B cell (primary cell): ENCODE measurements at regions of chr1 and their contacts with region 1.

Region 1: DNA sequence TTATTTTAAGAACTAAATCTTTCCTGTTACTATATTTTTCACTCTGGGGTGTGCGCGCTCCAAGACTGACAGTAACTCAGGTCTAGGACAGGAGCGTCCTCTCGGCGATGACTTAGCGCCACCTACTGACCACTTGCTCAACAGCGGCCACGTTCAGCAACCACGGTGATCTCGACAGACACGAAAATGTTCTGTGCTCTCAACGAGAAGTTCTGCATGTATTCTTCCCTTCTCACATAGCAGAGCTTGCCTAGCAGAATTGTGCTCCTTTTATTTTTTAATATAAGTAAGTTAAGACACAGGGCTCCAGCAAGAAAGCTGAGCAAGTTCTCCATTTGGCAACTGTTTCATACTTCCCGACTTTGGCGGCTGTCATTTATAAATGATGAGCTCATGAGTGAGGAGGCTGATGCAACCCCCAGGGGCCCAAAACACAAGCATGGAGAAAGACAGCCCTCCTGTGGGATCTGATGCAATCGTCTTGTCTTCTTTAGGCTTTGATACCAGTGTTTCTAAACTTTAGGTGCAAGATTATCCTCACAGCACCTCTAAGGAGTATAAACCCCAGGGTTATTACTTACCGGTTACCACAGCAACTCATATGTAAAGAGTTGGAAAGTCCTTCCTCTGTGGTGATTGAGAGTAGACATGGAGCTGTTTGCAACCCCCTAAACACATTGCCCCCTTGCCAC is 92.6 kb downstream of the HHIPL2 start:
- DNase-seq: peak; percentile 83
- ATAC-seq: peak; percentile 97
- H3K4me3 ChIP-seq: no peak overlapping the region
- H3K4me3 Mint-ChIP-seq: peak overlapping the region; percentile 1
- H3K27ac ChIP-seq: no peak overlapping the region
- H3K27ac Mint-ChIP-seq: no peak overlapping the region
- H3K4me1 ChIP-seq: peaks cover 3 to 11% of the 10 kb centered on the region in 2 donors
- H3K4me1 Mint-ChIP-seq: peaks cover 5% of the 10 kb centered on the region
- H3K27me3 ChIP-seq: peaks cover 0 to 6% (median 0%) of the 10 kb centered on the region in 4 experiments
- H3K27me3 Mint-ChIP-seq: peaks cover 6% of the 10 kb centered on the region
- CTCF ChIP-seq: peak; percentile 97

Region 2: DNA sequence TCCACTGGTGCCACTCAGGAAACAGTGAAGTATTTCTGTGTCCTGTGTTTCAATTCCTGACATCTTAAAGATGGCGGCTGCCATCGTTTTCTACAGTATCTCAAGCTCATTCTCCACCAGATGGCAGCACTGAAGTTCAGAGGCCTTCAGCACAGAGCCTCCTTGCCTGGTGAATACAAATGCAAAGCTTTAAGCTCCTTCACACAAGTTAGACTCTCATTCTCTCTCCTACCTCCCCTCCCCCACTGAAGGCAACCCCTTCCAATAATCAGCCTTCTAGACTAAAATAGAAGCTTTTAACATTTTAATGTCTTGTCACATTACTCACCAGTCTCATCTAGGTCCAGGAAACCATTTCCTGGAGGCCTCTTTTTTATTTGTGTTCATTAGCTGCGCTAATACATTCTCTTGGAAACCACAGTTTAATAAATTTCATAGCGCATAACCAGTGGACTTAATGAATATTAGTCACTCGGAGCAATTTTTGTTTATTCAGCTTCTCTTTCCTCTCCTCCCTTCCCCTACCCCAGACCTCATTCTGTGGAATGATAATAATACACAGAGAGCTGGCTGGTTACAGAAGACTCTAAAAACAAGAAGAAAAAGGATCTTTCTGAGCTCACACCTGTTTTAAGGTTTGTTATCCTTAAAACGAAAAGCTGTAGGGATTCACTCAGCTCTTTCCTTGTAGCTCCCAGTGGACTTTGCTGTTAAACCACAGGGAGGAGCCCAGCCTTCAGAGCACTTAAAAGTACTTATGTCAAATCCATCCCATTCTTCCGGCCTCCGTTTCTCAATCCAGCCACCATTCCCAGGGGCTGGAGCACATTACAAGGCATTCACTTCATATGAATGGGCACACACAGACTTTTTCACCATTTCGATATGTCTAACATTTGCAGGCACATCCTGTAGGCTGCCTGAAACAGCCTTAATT is 1191.2 kb before region 1 on chr1:
- CTCF ChIA-PET with region 1: interaction called, 39 read pairs
- POLR2A ChIA-PET with region 1: no interaction called
- intact Hi-C with region 1: no loop called
- DNase-seq: peak; percentile 63
- ATAC-seq: peak; percentile 58
- H3K4me3 ChIP-seq: no peak overlapping the region
- H3K4me3 Mint-ChIP-seq: no peak overlapping the region
- H3K27ac ChIP-seq: no peak overlapping the region
- H3K27ac Mint-ChIP-seq: no peak overlapping the region
- H3K4me1 ChIP-seq: no peaks in the 10 kb centered on the region
- H3K4me1 Mint-ChIP-seq: no peaks in the 10 kb centered on the region
- H3K27me3 ChIP-seq: peaks cover 0 to 3% (median 0%) of the 10 kb centered on the region in 4 experiments
- H3K27me3 Mint-ChIP-seq: peaks cover 28% of the 10 kb centered on the region
- CTCF ChIP-seq: peak; percentile 67

Region 3: DNA sequence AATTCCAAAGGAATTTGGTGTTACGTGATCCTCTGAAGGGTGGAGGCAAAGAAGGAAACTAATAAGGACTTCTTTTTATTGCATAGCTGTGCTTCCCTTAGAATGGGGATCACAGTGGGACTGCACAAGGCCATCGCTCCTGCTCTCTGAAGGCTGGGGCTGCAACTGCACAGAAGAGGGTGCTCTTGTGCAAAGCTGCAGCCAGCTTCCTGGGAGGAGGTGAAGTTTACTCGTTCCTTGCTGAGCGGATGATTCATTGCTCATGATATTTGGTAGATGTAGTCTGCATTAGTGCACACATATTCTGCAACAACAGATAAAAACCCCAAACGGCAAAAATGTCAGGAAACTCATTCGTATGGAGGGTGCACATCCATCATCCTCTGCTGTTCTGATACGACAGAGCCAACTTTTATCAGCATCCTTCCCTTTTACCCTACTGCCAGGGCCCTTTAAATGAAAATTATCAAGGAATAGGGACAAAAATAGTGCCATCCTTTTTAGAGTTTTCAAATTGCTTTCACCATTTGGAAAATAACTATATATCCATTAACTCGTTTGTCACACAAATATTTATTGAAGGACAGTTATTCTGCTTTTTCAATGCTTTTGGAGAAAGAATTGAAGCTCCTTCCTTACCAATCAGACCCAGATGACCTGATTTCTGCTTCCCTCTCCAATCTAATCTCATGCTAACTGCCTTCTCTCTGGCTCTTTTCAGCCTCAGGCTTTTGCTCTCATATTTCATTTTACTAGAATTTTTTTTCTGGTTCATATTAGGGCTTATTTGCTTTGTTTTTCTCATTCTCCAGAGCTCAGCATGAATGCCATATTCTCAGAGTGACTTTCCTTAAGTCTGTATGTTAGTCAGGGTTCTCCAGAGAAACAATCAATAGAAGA is 977.0 kb before region 1 on chr1:
- CTCF ChIA-PET with region 1: interaction called, 85 read pairs
- POLR2A ChIA-PET with region 1: no interaction called
- intact Hi-C with region 1: no loop called
- DNase-seq: peak; percentile 55
- ATAC-seq: peak; percentile 85
- H3K4me3 ChIP-seq: no peak overlapping the region
- H3K4me3 Mint-ChIP-seq: no peak overlapping the region
- H3K27ac ChIP-seq: no peak overlapping the region
- H3K27ac Mint-ChIP-seq: no peak overlapping the region
- H3K4me1 ChIP-seq: peaks cover 0 to 3% of the 10 kb centered on the region in 2 donors
- H3K4me1 Mint-ChIP-seq: peaks cover 2% of the 10 kb centered on the region
- H3K27me3 ChIP-seq: no peaks in the 10 kb centered on the region
- H3K27me3 Mint-ChIP-seq: peaks cover 5% of the 10 kb centered on the region
- CTCF ChIP-seq: peak; percentile 62

Region 4: DNA sequence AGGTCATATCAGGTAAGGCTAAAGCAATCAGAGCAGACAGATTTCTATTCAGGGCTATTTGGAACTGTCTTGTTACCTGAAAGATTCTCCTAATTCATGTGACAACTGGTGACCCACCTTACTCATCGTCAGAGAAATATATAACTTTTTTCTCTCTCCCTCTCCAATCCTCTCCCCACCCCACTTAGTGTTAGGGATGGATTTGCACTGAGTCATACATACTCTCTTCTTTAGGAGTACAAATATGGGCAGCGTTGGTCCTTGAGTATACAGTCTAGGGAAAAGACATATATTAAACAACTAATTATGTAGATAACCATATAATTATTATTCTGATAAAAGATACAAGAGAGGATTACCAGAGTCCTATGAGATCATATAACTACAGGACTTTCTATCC is 153.7 kb before region 1 on chr1:
- CTCF ChIA-PET with region 1: no interaction called
- POLR2A ChIA-PET with region 1: no interaction called
- intact Hi-C with region 1: no loop called
- DNase-seq: no peak
- ATAC-seq: no peak
- H3K4me3 ChIP-seq: no peak overlapping the region
- H3K4me3 Mint-ChIP-seq: no peak overlapping the region
- H3K27ac ChIP-seq: no peak overlapping the region
- H3K27ac Mint-ChIP-seq: no peak overlapping the region
- H3K4me1 ChIP-seq: no peaks in the 10 kb centered on the region
- H3K4me1 Mint-ChIP-seq: no peaks in the 10 kb centered on the region
- H3K27me3 ChIP-seq: no peaks in the 10 kb centered on the region
- H3K27me3 Mint-ChIP-seq: peaks cover 8% of the 10 kb centered on the region
- CTCF ChIP-seq: no peak

Region 5: DNA sequence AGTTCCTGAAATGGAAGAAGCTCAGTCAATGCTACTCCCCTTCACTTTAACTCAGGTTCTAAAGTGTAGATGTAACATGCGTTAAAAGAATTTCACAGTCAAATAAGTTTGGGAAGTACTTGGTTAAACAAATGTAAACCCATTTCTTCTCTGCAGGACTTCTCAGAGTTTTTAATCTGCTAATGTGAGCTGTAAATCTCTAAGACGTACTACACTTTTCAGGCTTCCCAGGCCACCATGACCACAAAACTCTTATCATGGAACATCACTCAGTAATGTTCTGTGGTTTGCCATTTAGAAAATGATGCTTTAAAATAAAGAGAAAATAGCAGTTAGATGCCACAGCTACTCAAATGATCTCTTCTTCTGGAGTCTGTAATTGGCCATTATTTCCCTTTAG is 11.8 kb before region 1 on chr1:
- CTCF ChIA-PET with region 1: interaction called, 30 read pairs
- POLR2A ChIA-PET with region 1: no interaction called
- intact Hi-C with region 1: no loop called
- DNase-seq: no peak
- ATAC-seq: no peak
- H3K4me3 ChIP-seq: no peak overlapping the region
- H3K4me3 Mint-ChIP-seq: no peak overlapping the region
- H3K27ac ChIP-seq: no peak overlapping the region
- H3K27ac Mint-ChIP-seq: no peak overlapping the region
- H3K4me1 ChIP-seq: no peaks in the 10 kb centered on the region
- H3K4me1 Mint-ChIP-seq: no peaks in the 10 kb centered on the region
- H3K27me3 ChIP-seq: peaks cover 0 to 7% (median 2%) of the 10 kb centered on the region in 4 experiments
- H3K27me3 Mint-ChIP-seq: peaks cover 20% of the 10 kb centered on the region
- CTCF ChIP-seq: no peak

Region 6: DNA sequence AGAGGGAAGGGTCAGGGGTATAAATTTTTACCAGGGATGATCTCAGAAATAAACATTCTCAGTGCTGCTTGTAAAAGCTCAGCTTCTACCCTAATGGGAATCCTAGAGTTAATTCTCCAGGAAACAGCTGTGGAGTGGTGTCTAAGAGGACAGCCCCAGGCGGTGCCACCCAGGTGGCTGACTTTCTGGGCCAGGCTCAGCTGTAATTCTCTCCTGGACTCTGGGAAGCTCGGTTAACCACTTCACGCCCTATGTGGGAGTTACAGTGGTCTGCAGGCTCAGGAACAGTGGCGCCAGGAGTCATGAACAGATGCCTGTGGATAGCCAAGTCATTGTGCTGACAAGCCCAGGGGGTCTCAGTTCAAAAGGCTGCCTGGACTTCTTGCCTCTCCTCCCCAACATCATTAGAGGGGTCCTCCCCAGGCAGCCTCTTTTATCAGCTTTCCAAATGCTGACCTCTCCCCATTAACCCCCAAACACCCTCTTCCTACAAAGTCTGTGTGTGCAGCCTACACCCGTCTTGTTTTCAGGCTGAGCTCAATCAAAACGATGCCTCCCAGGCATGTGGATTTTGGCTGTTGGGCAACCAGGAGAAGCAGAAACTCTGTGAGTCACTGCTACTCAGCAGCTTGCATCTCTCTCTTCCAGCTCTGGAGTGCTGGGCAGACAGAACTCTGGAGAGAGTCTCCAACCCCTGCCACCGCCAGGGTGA is 91.4 kb after region 1 on chr1:
- CTCF ChIA-PET with region 1: no interaction called
- POLR2A ChIA-PET with region 1: no interaction called
- intact Hi-C with region 1: no loop called
- DNase-seq: no peak
- ATAC-seq: no peak
- H3K4me3 ChIP-seq: no peak overlapping the region
- H3K4me3 Mint-ChIP-seq: no peak overlapping the region
- H3K27ac ChIP-seq: no peak overlapping the region
- H3K27ac Mint-ChIP-seq: no peak overlapping the region
- H3K4me1 ChIP-seq: no peaks in the 10 kb centered on the region
- H3K4me1 Mint-ChIP-seq: no peaks in the 10 kb centered on the region
- H3K27me3 ChIP-seq: peaks cover 0 to 16% (median 7%) of the 10 kb centered on the region in 4 experiments
- H3K27me3 Mint-ChIP-seq: peaks cover 26% of the 10 kb centered on the region
- CTCF ChIP-seq: no peak

Region 7: GRCh38 chr1:222634180-222635013 is 179.1 kb after region 1 on chr1:
- CTCF ChIA-PET with region 1: interaction called, 13 read pairs
- POLR2A ChIA-PET with region 1: no interaction called
- intact Hi-C with region 1: no loop called
- DNase-seq: peak; percentile 89
- ATAC-seq: peak; percentile 86
- H3K4me3 ChIP-seq: no peak overlapping the region
- H3K4me3 Mint-ChIP-seq: no peak overlapping the region
- H3K27ac ChIP-seq: peak overlapping the region in 1 of 2 donors; percentile 42
- H3K27ac Mint-ChIP-seq: peak overlapping the region; percentile 61
- H3K4me1 ChIP-seq: peaks cover 12 to 15% of the 10 kb centered on the region in 2 donors
- H3K4me1 Mint-ChIP-seq: peaks cover 11% of the 10 kb centered on the region
- H3K27me3 ChIP-seq: no peaks in the 10 kb centered on the region
- H3K27me3 Mint-ChIP-seq: no peaks in the 10 kb centered on the region
- CTCF ChIP-seq: peak; percentile 93